Right ventricle myocardium superior (tissue), 1 donor: ENCODE measurements at regions of chr15 and their contacts with region 1.

Region 1: DNA sequence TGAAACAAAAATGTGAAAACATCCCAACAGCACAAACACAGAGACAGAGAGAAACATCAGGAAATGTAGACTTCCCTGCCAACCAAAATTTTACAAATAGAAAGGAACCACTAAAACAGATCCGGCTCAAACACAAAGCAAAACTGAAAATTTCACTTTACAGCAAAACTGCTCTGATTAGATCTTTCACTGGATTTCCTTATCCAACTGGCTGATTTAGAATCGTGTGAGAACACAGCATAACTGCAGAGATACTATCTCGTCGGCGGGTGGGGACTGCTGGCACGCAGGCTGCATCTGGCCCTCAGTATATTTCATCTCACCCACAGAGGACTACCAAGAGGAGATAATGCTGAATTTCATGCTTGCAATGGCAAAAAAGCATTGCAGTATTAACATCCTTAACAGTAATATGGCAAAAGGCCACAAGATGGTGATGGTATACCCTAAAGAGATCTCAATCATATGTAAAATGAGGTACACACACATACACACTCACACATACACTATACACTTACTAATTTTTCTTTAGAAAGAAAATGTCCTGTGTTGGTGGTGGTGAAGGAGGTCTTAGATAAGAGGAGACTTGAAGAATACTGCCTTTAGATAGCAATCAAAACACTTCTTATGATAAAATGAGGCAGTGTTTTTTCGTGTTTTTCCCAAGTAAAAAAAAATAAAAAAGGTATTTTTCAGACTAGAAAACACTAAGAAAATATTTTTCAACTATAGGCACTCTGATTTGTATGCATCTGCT is 10.6 kb upstream of the LEO1 start:
- DNase-seq: no peak
- ATAC-seq: peak; percentile 78

Region 2: DNA sequence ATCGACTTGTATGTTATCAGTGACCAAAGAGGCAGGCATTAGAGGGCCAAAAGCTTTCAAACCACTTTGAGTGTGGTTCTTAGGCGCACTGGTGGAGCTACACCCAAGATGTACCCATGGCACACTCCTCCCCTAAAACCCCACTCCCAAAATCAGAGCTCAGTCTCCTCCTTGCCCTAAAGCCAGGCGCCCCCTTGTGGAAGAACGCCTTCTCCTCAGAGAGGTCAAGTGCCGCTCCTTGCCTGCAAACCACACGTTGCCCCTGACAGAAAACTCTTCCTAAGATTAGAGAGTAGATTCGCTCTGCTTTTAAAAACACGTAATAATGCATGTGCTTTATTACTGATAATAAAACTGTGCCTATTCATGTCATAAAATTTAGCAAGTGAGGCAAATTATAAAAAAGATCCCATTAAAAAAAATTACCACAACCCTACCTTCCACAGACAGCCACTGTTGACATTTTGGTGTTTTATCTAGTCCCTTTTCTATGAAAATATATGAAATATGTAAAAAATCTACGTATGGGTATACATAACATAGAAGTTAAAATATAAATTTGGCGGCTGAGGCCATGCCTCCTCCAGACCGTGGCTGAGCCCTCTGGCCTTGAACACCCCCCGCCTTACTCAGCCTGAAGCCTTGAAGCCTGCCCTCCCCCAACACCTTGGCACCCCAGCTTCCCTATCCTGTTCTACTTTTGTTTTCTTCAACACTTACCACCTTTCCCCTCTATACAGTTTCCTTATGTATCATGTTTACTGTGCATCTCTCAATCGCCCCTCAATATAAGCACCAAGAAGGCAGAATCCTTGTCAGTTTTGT is 96.9 kb after region 1 on chr15:
- intact Hi-C with region 1: loop called (anchors 5 kb)
- DNase-seq: peak; percentile 87
- ATAC-seq: peak; percentile 90

Region 3: DNA sequence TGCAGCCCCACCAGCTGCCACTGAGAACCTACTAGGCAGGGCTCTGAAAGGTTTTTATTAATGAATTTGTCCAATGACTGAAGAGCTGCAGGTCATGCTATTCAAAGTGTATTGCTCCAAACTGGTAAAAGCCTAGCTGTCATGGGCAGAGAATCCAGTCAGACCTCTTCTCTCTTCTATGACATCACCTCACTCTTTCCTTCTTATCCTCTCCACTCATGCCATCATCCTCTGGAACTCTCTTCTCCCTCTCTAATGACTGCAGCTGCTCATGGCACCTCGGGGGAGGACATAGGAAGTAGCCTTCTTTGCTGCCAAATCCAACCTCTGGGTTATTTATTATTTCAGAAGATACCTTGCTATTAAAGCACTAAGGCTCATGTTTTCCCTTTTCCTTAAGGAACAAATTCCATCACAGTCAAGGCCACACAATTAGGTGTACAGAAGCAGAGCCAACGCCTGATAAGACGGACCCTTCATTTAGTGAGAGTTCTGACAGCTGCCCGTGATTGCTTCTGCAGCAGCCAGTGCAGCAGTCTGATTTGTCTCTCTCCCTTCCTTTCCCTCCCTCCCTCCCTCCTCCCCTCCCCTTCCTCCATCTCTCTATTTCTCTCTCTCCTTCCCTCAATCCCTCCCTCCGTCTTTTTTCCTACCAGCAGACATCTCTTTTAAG is 894.9 kb after region 1 on chr15:
- intact Hi-C with region 1: no loop called
- DNase-seq: no peak
- ATAC-seq: no peak